ENCODE measurements at regions of chr7 and their contacts with region 1.

Region 1: DNA sequence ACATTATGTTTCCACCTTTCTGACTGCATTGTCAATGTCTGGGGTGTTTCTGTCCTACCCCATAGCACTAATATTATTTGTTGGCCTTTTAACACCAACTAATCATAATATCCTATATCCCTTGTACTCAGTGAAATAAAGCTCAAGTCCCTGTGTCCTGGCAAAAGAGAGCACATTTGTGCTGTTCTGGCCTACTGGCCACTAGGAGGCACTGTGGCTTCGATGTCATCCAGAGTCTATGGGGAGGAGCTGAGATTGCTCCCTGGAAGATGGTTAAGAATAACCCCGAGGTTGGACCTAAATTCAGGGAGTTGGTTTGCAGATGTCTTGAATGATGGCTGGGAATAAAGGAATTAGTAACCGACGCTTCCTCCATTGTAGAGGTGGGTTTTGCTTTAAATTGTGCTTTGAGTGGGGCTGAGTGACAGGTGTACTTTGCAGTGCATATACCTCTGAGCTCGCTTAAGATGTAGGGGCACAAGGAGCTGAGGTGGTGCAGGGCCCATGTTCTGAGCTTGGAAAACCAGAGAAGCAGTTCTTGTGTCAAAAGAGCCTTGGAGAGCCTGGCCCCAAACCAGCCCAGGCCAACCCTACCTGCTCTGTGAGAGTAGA is 191.2 kb upstream of the PRSS1 start:
- DNase-seq: peak; percentile 62
- H3K4me3 Mint-ChIP-seq: peak overlapping the region; percentile 45
- H3K27ac Mint-ChIP-seq: no peak overlapping the region
- H3K4me1 Mint-ChIP-seq: peaks cover 11% of the 10 kb centered on the region
- H3K27me3 Mint-ChIP-seq: no peaks in the 10 kb centered on the region

Region 2: DNA sequence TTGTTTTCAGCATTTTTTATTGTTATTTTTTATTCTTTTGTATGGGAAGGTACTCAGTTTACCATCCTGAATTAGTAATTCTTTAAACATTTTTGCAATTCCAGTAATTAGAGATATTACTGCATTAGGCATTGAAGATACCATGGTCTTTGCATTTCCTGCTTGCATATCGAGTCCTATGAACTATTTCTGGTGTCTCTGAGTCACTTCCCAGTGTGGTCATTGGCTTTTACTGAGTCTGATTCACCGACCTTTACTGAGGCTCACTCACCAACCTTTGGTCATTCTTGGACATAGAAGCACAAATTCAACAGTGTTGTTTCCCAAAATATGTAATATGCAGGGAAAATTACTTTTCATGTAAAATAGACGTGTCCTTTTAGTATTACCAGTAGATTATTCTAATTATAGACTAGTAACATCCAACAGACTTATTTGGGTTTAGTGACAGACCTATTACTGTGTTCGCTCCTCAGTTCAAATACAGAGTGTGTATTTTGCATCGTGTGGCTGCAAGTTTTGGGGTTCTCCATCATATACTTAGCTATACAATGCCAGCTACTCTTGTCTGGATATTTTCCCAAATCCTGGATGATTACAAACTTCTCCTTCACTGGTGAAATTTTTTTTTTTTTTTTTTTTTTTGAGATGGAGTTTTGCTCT is 10.5 kb after region 1 on chr7:
- CTCF ChIA-PET with region 1: interaction called, 13 read pairs
- POLR2A ChIA-PET with region 1: no interaction called
- DNase-seq: no peak
- H3K4me3 Mint-ChIP-seq: no peak overlapping the region
- H3K27ac Mint-ChIP-seq: no peak overlapping the region
- H3K4me1 Mint-ChIP-seq: peaks cover 10% of the 10 kb centered on the region
- H3K27me3 Mint-ChIP-seq: peaks cover 7% of the 10 kb centered on the region

Measured in activated CD4-positive, alpha-beta T cell treated with anti-CD3 and anti-CD28 coated beads, Interleukin-2, amount 10 ng/mL, durations not matched to agents 7 days and 5 days (primary cell).